ENCODE measurements at regions of chr3 and their contacts with region 1.

Region 1: GRCh38 chr3:58463181-58463941 is 28.5 kb upstream of the KCTD6 start:
- DNase-seq: peak; percentile 74 to 87 (median 81)
- H3K4me3 ChIP-seq: peak overlapping the region in 2 of 3 experiments; percentile 12 to 55
- H3K4me3 Mint-ChIP-seq: peak overlapping the region; percentile 66 to 81
- H3K27ac ChIP-seq: no peak overlapping the region
- H3K27ac Mint-ChIP-seq: peak overlapping the region in 4 of 7 donors; percentile 21 to 85 (median 38)
- H3K4me1 ChIP-seq: peaks cover 14 to 17% of the 10 kb centered on the region in 2 donors
- H3K4me1 Mint-ChIP-seq: peaks cover 16% of the 10 kb centered on the region
- H3K27me3 ChIP-seq: no peaks in the 10 kb centered on the region
- H3K27me3 Mint-ChIP-seq: peaks cover 0 to 5% (median 0%) of the 10 kb centered on the region in 3 donors
- CTCF ChIP-seq: peak; percentile 97

Region 2: DNA sequence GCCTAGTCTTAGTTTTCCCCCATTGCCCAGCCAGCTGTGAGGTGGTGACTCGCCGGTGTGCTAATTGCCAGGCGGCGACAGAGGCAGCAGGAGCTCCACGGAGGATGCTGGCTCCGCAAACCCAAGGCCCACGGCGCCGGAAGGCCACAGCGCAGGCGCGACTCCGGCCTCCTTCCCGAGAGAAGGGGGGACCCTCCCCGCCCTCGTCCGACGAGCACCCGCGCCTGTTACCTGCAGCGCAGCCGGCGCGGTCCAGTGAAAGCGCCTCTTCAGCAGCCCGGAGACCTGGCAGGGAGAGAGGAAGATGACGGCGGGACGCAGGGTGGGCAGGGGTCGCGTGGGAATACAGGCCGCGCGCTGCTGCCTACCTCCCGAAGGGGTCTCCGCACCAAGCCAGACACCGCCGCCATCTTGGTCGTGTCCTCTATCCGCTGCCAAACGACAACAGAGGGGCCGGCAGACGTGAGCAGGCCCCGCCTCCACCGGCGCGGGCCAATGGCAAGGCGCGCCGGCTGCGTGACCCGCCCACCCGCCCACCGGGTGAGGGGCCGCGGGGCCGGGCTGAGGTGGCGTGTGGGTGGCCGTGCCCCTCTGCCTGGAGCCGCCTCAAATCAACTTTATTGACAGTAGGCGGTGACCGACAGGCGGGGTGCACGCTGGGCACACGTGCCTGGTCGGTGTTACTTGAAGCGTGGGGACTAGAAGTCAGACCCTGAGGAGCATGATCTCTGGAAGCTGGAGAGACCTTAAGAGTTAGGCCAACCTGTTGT is 29.8 kb before region 1 on chr3 and contains the start of gene PDHB:
- intact Hi-C with region 1: loop called in 1 of 2 experiments (anchors 5 kb)
- DNase-seq: peak; percentile 82 to 84 (median 84)
- H3K4me3 ChIP-seq: peak within 1 kb of the TSS; percentile 93 to 98 (median 96)
- H3K4me3 Mint-ChIP-seq: peak within 1 kb of the TSS; percentile 88 to 94
- H3K27ac ChIP-seq: peak within 1 kb of the TSS; percentile 74 to 91
- H3K27ac Mint-ChIP-seq: peak within 1 kb of the TSS; percentile 87 to 96 (median 94)
- H3K4me1 ChIP-seq: peaks cover 15 to 18% of the 10 kb centered on the region in 2 donors
- H3K4me1 Mint-ChIP-seq: peaks cover 19% of the 10 kb centered on the region
- H3K27me3 ChIP-seq: no peaks in the 10 kb centered on the region
- H3K27me3 Mint-ChIP-seq: peaks cover 0 to 1% (median 0%) of the 10 kb centered on the region in 3 donors
- CTCF ChIP-seq: no peak
- polyA plus RNA-seq, gene PDHB: 30.5 to 125 (median 112) TPM